Cardiac septum (tissue), 1 donor: ENCODE measurements at regions of chr5 and their contacts with region 1.

Region 1: GRCh38 chr5:36241631-36242533 is at the start of gene NADK2:
- DNase-seq: peak; percentile 97
- total RNA-seq, gene NADK2: 34.6 TPM

Region 2: DNA sequence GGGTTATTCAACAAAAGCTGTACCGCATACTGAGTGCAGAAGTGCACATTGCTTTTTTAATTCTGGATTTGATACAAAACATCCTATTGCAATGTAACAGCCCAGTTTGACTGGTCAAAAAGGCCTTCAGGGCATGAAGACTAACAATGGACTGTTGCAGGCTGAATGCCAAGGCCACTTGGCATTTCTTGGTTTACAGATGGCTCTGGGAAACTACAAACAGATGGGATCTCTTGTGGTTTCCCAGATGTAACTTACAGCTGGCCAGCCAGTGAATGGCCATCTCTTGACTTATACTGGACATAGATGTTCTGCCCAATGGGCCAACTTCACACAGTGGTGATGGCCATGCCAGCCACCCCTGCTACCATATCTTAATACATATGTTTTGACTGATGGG is 212.0 kb before region 1 on chr5:
- intact Hi-C with region 1: no loop called
- DNase-seq: no peak

Region 3: DNA sequence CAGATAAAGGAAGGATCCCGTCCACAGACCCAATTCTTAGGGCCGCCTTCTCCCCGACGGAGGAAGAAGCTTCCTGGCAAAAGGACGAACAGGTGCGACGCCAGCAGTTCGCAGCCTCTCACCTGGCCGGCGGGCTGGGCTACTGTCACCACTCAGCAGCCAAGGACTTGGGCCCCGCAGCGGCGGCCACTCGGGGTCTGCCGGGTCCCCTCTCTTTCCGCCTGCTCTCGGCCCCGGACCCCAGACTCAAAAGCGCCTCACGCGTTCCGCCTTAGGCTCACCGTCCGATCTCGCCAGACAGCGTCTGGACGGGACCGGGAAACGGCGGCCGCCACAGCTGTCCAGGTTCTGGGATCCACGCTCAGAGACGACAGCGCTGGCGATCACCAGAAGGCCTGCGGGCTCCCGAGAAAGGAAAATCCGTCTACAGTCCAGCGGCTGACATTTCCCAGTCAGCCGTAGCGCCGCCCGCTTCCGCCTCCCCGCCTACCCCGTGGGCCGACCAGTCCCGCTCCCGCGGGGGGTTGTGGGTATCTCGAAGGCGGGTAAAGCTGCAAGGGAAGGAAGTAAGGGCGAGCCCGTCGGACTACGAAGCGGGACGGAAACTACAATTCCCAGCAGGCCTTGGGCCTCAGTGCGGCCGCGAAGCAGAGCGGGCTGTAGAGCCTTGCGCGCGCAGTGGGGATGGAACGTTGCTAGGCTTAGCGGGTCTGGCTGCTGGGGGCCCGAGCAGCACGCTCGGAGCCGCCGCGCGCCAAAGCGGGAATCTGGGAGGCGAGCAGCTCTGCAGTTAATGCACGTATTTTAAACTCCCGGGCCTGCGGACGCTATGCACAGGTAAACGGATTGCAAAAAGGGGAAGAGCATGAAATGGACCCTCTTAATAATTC is 90.2 kb before region 1 on chr5 and contains the starts of genes LMBRD2 and SKP2:
- intact Hi-C with region 1: loop called (anchors 1 kb)
- DNase-seq: peak; percentile 100
- total RNA-seq, gene LMBRD2: 11.7 TPM
- total RNA-seq, gene SKP2: 3.7 TPM